ENCODE measurements at regions of chr10 and their contacts with region 1.

Region 1: DNA sequence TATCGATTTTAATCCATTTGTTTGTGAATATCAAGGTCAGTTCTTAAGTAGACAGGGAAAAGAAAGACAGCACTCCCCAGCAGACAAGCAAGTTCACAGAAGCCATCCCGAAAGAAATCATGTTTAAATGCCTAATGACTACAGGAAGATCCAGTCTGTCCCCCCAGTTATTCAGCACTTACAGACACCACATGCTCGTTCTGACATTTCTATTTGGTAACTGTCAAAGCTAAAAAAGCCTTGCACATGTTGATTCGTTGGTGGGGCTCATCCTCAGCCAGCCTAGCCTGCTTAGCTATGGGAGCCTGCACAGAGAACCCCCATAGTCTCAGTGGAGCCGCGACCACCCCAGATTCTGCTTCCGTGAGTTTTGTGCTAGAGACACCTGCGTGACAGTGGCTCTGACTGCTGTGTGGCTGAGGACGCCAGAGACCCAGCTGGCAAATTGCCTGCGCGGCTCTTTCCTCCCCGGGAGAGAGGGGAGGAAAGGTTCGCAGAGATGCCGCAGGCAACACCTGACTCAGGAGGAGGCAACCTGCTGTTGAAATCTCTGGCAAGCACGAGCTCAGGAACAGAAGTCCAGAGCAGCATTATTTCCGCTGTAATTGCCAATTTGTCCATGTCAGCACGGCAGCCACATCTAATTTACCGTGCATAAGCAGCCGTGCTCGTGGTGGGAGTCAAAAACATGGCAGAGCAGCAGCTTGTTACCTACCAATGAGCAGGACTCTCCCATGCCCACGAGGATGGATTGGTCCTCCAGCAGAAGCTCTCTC is 194.2 kb downstream of the GPAM start:
- DNase-seq: no peak
- H3K4me3 ChIP-seq: no peak overlapping the region
- H3K27ac ChIP-seq: no peak overlapping the region
- H3K4me1 ChIP-seq: no peaks in the 10 kb centered on the region
- H3K27me3 ChIP-seq: no peaks in the 10 kb centered on the region
- CTCF ChIP-seq: no peak
- POLR2A ChIP-seq: no peak

Region 2: DNA sequence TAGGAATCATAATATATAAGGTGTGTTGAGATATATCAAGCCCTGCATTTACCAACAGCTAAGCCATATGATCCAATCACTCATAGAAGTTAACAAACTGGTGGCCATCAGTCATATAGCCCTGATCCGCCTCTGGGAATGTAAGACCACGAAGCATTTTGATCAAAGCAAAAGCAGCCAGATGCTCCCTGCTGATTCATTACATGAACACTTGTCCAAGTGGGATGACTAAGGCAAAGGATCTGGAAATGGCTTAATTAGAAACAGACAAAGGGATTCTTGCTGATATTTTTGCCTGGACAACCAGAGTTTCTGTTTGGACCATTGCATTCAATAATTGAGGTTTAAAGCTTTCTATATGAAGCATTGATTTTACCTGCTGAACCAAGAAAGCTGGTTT is 341.3 kb before region 1 on chr10:
- intact Hi-C with region 1: loop called (anchors 10 kb)
- DNase-seq: no peak
- H3K4me3 ChIP-seq: no peak overlapping the region
- H3K27ac ChIP-seq: no peak overlapping the region
- H3K4me1 ChIP-seq: peaks cover 5% of the 10 kb centered on the region
- H3K27me3 ChIP-seq: no peaks in the 10 kb centered on the region
- CTCF ChIP-seq: no peak
- POLR2A ChIP-seq: no peak

Measured in vagina (tissue), 2 donors.